ENCODE measurements at regions of chr5 and their contacts with region 1.

Region 1: DNA sequence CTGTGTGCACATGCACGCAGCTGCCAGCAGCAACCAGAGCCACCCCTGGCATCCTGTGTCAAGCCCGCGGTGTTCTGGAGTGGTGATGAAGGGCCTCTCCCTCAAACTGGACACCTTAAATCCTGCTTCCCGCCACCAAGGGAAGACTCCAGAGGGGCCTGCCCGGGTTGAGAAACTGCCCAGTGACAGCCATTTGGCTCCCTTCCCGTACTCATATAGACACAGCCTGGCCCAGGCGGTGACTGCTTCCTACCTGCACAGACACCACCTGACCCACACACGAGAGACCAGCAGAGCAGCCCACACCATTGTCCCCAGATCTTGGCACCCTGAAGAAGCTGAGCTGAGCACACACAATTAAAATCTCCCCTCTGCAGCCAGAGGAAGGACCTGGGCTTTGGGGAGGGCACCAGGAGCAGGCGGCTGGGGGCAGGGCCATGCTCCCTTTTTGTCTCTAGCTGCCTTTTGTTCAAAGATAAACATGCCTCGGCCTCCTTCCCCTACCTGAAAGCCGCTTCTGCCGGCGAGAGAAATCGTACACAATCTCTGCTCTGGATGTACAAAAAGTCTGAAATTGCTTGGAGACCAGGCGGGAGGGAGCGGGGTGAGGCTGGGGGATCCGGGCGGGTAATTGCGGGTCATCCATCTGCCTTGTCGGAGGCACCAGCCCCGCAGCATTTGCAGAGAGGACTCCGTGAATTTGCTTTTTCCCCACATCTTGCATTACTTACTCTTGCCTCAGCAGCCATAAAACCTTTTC is 78.4 kb downstream of the TSPAN17 start:
- DNase-seq: no peak
- H3K4me3 ChIP-seq: no peak overlapping the region
- H3K27ac ChIP-seq: no peak overlapping the region
- H3K4me1 ChIP-seq: no peaks in the 10 kb centered on the region
- H3K27me3 ChIP-seq: peaks cover 13% of the 10 kb centered on the region in 2 experiments
- CTCF ChIP-seq: no peak
- POLR2A ChIP-seq: no peak

Region 2: DNA sequence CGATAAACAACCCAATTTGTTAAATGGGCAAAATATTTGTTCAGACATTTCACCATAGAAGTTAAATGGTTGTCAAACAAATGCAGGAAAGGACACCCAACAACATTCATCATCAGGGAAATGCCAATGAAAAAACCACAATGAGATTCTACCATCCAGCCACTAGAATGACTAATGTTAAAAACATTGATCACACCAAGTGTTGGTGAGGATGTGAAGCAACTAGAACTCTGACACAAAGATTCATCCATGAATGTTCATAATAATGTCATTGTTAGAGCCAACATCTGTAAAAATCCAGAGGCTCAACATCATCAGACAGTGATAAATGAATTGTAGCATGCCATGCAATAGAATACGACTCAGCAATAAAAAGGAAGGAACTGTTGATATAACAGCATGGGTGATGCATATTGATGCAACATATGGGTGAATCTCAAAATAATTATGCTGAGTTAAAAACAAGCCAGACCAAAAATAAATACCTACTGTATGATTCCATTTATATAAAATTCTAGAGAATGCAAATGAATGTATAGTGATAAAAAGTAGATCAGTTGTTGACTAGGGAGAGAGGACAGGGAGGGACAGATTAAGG is 28.8 kb after region 1 on chr5:
- CTCF ChIA-PET with region 1: no interaction called
- POLR2A ChIA-PET with region 1: no interaction called
- dilution Hi-C with region 1: no loop called
- intact Hi-C with region 1: loop called (anchors 1 kb)
- DNase-seq: no peak
- H3K4me3 ChIP-seq: no peak overlapping the region
- H3K27ac ChIP-seq: no peak overlapping the region
- H3K4me1 ChIP-seq: no peaks in the 10 kb centered on the region
- H3K27me3 ChIP-seq: peaks cover 7 to 21% of the 10 kb centered on the region in 2 experiments
- CTCF ChIP-seq: no peak
- POLR2A ChIP-seq: no peak

Region 3: GRCh38 chr5:176762489-176762888 is 36.8 kb after region 1 on chr5:
- CTCF ChIA-PET with region 1: no interaction called
- POLR2A ChIA-PET with region 1: no interaction called
- dilution Hi-C with region 1: no loop called
- intact Hi-C with region 1: loop called (anchors 1 kb)
- DNase-seq: no peak
- H3K4me3 ChIP-seq: no peak overlapping the region
- H3K27ac ChIP-seq: no peak overlapping the region
- H3K4me1 ChIP-seq: no peaks in the 10 kb centered on the region
- H3K27me3 ChIP-seq: peaks cover 0 to 10% of the 10 kb centered on the region in 2 experiments
- CTCF ChIP-seq: no peak
- POLR2A ChIP-seq: no peak

Region 4: DNA sequence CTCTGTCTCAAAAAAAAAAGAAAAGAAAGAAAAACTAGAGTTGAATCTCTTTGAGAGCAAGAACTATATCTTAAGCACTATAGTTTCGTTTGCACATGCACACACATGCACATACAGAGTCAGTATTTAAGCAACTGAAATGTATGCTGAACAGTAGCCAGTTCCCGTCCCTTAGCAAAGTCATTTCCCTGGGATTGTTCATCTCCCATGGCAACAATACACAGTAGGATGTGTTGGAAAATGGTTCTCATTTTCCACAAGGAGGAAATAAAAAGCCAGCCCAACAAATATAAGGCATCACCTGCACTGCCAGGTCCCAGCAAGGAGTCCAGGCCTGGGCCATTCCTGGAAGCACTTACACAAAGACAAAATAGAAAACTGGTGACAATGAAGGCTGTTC is 292.6 kb after region 1 on chr5:
- CTCF ChIA-PET with region 1: no interaction called
- POLR2A ChIA-PET with region 1: no interaction called
- dilution Hi-C with region 1: no loop called
- intact Hi-C with region 1: no loop called
- DNase-seq: no peak
- H3K4me3 ChIP-seq: no peak overlapping the region
- H3K27ac ChIP-seq: no peak overlapping the region
- H3K4me1 ChIP-seq: peaks cover 6% of the 10 kb centered on the region
- H3K27me3 ChIP-seq: no peaks in the 10 kb centered on the region
- CTCF ChIP-seq: no peak
- POLR2A ChIP-seq: no peak

Measured in endothelial cell of umbilical vein (primary cell).